ENCODE measurements at regions of chr15 and their contacts with region 1.

Region 1: GRCh38 chr15:52078876-52079700 is 33.5 kb downstream of the BCL2L10 start:
- DNase-seq: peak; percentile 75 to 85
- H3K4me3 ChIP-seq: no peak overlapping the region
- H3K4me3 Mint-ChIP-seq: no peak overlapping the region
- H3K27ac Mint-ChIP-seq: no peak overlapping the region
- H3K4me1 ChIP-seq: no peaks in the 10 kb centered on the region
- H3K4me1 Mint-ChIP-seq: peaks cover 8% of the 10 kb centered on the region
- H3K27me3 ChIP-seq: no peaks in the 10 kb centered on the region
- H3K27me3 Mint-ChIP-seq: no peaks in the 10 kb centered on the region
- CTCF ChIP-seq: peak; percentile 67 to 85

Region 2: GRCh38 chr15:51782357-51782896 is 296.7 kb before region 1 on chr15:
- CTCF ChIA-PET with region 1: no interaction called
- POLR2A ChIA-PET with region 1: no interaction called
- intact Hi-C with region 1: loop called (anchors 2 kb)
- DNase-seq: peak in 1 of 2 experiments; percentile 26
- H3K4me3 ChIP-seq: no peak overlapping the region
- H3K4me3 Mint-ChIP-seq: no peak overlapping the region
- H3K27ac Mint-ChIP-seq: no peak overlapping the region
- H3K4me1 ChIP-seq: no peaks in the 10 kb centered on the region
- H3K4me1 Mint-ChIP-seq: no peaks in the 10 kb centered on the region
- H3K27me3 ChIP-seq: no peaks in the 10 kb centered on the region
- H3K27me3 Mint-ChIP-seq: no peaks in the 10 kb centered on the region
- CTCF ChIP-seq: peak; percentile 28 to 51

Region 3: GRCh38 chr15:51982013-51982769 is 96.9 kb before region 1 on chr15:
- CTCF ChIA-PET with region 1: interaction called, 8 read pairs
- POLR2A ChIA-PET with region 1: no interaction called
- intact Hi-C with region 1: loop called (anchors 1 kb)
- DNase-seq: peak in 1 of 2 experiments; percentile 47
- H3K4me3 ChIP-seq: no peak overlapping the region
- H3K4me3 Mint-ChIP-seq: peak overlapping the region; percentile 27
- H3K27ac Mint-ChIP-seq: peak overlapping the region; percentile 42
- H3K4me1 ChIP-seq: no peaks in the 10 kb centered on the region
- H3K4me1 Mint-ChIP-seq: peaks cover 8% of the 10 kb centered on the region
- H3K27me3 ChIP-seq: no peaks in the 10 kb centered on the region
- H3K27me3 Mint-ChIP-seq: no peaks in the 10 kb centered on the region
- CTCF ChIP-seq: peak; percentile 39 to 51

Region 4: GRCh38 chr15:52112203-52112750 is 33.2 kb after region 1 on chr15:
- CTCF ChIA-PET with region 1: interaction called, 3 read pairs
- POLR2A ChIA-PET with region 1: no interaction called
- intact Hi-C with region 1: loop called (anchors 5 kb)
- DNase-seq: peak; percentile 43 to 62
- H3K4me3 ChIP-seq: peak overlapping the region; percentile 65
- H3K4me3 Mint-ChIP-seq: peak overlapping the region; percentile 75
- H3K27ac Mint-ChIP-seq: no peak overlapping the region
- H3K4me1 ChIP-seq: peaks cover 19% of the 10 kb centered on the region
- H3K4me1 Mint-ChIP-seq: peaks cover 11% of the 10 kb centered on the region
- H3K27me3 ChIP-seq: no peaks in the 10 kb centered on the region
- H3K27me3 Mint-ChIP-seq: no peaks in the 10 kb centered on the region
- CTCF ChIP-seq: no peak

Region 5: DNA sequence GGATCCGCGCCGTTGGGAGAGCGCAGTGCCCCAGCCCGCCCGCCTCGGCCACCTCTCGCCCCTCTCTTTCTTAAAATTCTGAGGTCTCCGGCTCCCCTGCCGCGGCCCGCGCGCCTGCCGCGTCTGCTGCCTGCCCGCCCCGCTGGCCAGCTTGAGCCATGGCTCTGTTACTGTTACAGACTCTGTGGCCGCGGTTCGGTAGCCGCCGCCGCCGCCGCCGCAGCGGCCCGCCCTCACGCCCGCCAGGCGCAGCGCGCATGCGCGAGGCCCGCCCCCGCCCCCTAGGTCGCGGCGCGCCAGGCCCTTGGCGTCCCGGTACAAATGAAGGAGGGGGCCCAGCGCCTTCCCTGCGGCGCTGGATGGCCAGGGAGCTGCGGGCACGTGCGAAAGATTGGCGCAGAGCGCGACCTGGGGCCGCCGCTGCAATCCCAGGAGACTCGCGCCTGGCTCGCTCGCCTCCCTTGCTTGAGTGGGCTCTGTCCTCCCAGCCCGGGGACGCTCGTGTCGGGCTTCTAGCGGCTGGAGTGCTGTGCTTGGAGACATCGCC is 711.1 kb after region 1 on chr15 and contains the start of gene ONECUT1:
- CTCF ChIA-PET with region 1: no interaction called
- POLR2A ChIA-PET with region 1: no interaction called
- intact Hi-C with region 1: no loop called
- DNase-seq: peak; percentile 60 to 82
- H3K4me3 ChIP-seq: peak within 1 kb of the TSS; percentile 57
- H3K4me3 Mint-ChIP-seq: peak within 1 kb of the TSS; percentile 88
- H3K27ac Mint-ChIP-seq: no peak within 1 kb of the TSS
- H3K4me1 ChIP-seq: no peaks in the 10 kb centered on the region
- H3K4me1 Mint-ChIP-seq: no peaks in the 10 kb centered on the region
- H3K27me3 ChIP-seq: no peaks in the 10 kb centered on the region
- H3K27me3 Mint-ChIP-seq: peaks cover 5% of the 10 kb centered on the region
- CTCF ChIP-seq: no peak
- total RNA-seq, gene ONECUT1: 0.53 and 0.68 TPM in 2 replicates

Measured in Caco-2 (cell line).